Sigmoid colon (tissue), 7 donors: ENCODE measurements at regions of chr10 and their contacts with region 1.

Region 1: GRCh38 chr10:4849555-4850242 is 23.7 kb downstream of the AKR1E2 start:
- DNase-seq: peak; percentile 95
- H3K4me3 ChIP-seq: no peak overlapping the region
- H3K27ac ChIP-seq: peak overlapping the region in 2 of 4 donors; percentile 12 to 40
- H3K4me1 ChIP-seq: peaks cover 0 to 24% (median 9%) of the 10 kb centered on the region in 4 donors
- H3K27me3 ChIP-seq: no peaks in the 10 kb centered on the region
- CTCF ChIP-seq: peak; percentile 98 to 100 (median 100)
- EP300 ChIP-seq: no peak
- POLR2A ChIP-seq: no peak

Region 2: GRCh38 chr10:4678023-4678950 is 171.4 kb before region 1 on chr10:
- intact Hi-C with region 1: no loop called
- DNase-seq: no peak
- H3K4me3 ChIP-seq: no peak overlapping the region
- H3K27ac ChIP-seq: peak overlapping the region in 3 of 4 donors; percentile 70 to 77 (median 77)
- H3K4me1 ChIP-seq: peaks cover 0 to 18% (median 10%) of the 10 kb centered on the region in 4 donors
- H3K27me3 ChIP-seq: no peaks in the 10 kb centered on the region
- CTCF ChIP-seq: no peak
- EP300 ChIP-seq: peak in 1 of 4 donors; percentile 36
- POLR2A ChIP-seq: no peak

Region 3: DNA sequence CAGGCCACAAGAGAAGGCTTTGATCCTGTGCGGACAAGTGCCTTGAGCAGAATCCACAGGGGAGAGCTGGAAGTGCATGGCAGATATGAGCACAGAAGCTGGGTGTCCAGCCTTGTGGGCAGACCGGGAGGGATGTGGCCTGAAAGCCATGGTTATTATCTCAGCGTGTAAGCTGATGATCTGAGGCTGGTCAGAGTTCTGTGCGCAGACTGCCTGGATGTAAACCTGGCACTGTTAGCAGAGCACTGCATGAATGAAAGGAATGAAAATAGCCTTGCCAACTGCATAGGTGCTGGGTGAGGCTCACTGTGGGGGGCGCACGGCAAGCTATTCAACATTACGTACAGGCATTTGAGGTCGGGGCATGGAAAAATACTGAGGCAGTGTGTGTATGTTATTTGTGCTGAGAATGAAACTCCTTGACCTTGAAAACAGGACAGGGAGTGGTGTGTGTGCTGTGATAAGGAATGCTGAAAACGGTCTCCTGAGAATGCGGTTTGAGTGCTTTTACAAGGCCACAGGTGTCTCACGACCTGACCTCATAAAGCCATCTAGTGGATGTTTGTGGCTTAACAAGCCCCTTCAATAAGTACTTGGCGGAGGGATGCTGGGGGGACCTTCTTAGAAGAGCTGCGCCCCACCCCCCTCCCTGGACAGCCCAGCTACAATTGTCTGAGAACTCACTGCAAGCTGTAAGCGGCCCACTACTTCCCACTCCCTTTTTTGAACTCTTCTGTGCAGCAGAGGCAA is 132.2 kb after region 1 on chr10:
- intact Hi-C with region 1: loop called (anchors 5 kb)
- DNase-seq: no peak
- H3K4me3 ChIP-seq: no peak overlapping the region
- H3K27ac ChIP-seq: peak overlapping the region in 3 of 4 donors; percentile 24 to 58 (median 40)
- H3K4me1 ChIP-seq: peaks cover 0 to 27% (median 15%) of the 10 kb centered on the region in 4 donors
- H3K27me3 ChIP-seq: no peaks in the 10 kb centered on the region
- CTCF ChIP-seq: peak in 2 of 4 experiments; percentile 23 to 28
- EP300 ChIP-seq: no peak
- POLR2A ChIP-seq: no peak

Region 4: DNA sequence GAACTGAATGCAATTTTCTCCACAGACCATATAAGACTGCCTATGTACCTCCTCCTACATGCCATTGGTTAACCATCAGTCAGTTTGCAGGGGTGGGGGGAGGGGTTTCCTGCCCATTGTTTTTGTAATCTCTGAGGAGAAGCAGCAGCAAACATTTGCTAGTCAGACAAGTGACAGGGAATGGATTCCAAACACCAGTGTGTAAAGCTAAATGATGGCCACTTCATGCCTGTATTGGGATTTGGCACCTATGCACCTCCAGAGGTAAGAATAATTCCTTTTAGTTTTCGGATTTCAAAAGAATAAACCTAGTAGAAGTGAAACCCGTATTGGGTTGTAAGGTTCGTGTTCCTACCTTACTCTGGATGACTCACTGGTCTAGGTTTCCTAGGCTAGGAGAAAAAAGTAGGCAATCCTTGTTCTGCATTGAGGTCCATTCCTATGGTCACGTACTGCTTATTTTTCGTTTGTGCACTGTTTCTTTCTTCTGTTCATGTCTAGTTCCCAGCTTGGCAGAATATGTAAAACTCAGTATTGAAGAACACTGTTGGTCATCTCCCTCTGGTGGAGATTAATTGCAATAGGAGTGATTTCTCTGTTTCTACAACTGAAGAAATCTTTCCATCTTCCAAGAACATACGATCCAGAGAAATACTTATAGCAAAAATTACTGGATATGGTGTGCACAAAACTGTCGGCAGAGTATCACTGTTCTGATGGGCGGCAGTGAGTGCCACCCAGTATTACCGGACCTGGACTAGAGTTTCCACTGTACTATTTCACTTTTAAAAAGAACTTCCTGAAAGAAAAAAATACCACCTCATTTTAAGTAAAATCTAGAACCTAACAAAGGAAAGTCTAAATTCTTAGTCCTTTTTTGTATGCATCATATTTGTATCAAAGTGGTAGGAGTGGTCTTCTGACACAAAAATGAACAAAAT is 244.8 kb after region 1 on chr10 and contains the start of gene AKR1C3:
- intact Hi-C with region 1: loop called (anchors 1 kb)
- DNase-seq: no peak
- H3K4me3 ChIP-seq: peak within 1 kb of the TSS; percentile 22 to 50 (median 40)
- H3K27ac ChIP-seq: peak within 1 kb of the TSS; percentile 20 to 60 (median 58)
- H3K4me1 ChIP-seq: no peaks in the 10 kb centered on the region
- H3K27me3 ChIP-seq: no peaks in the 10 kb centered on the region
- CTCF ChIP-seq: peak; percentile 63 to 84 (median 72)
- EP300 ChIP-seq: no peak
- POLR2A ChIP-seq: peak in 1 of 2 donors; percentile 42
- total RNA-seq, gene AKR1C3: 6.1 to 30.5 (median 12.0) TPM

Region 5: GRCh38 chr10:5283305-5284158 is 433.8 kb after region 1 on chr10:
- intact Hi-C with region 1: loop called (anchors 2 kb)
- DNase-seq: peak; percentile 70
- H3K4me3 ChIP-seq: no peak overlapping the region
- H3K27ac ChIP-seq: no peak overlapping the region
- H3K4me1 ChIP-seq: no peaks in the 10 kb centered on the region
- H3K27me3 ChIP-seq: no peaks in the 10 kb centered on the region
- CTCF ChIP-seq: peak in 3 of 4 experiments; percentile 52 to 56 (median 52)
- EP300 ChIP-seq: no peak
- POLR2A ChIP-seq: no peak

Region 6: GRCh38 chr10:5385224-5385623 is 535.5 kb after region 1 on chr10:
- intact Hi-C with region 1: loop called (anchors 2 kb)
- DNase-seq: no peak
- H3K4me3 ChIP-seq: no peak overlapping the region
- H3K27ac ChIP-seq: no peak overlapping the region
- H3K4me1 ChIP-seq: no peaks in the 10 kb centered on the region
- H3K27me3 ChIP-seq: no peaks in the 10 kb centered on the region
- CTCF ChIP-seq: no peak
- EP300 ChIP-seq: no peak
- POLR2A ChIP-seq: no peak

Region 7: GRCh38 chr10:5434017-5434753 is 584.5 kb after region 1 on chr10:
- intact Hi-C with region 1: loop called (anchors 2 kb)
- DNase-seq: no peak
- H3K4me3 ChIP-seq: no peak overlapping the region
- H3K27ac ChIP-seq: no peak overlapping the region
- H3K4me1 ChIP-seq: no peaks in the 10 kb centered on the region
- H3K27me3 ChIP-seq: no peaks in the 10 kb centered on the region
- CTCF ChIP-seq: peak; percentile 42 to 57 (median 51)
- EP300 ChIP-seq: no peak
- POLR2A ChIP-seq: no peak

Region 8: GRCh38 chr10:5488309-5489167 is 638.8 kb after region 1 on chr10:
- intact Hi-C with region 1: no loop called
- DNase-seq: peak; percentile 56
- H3K4me3 ChIP-seq: no peak overlapping the region
- H3K27ac ChIP-seq: no peak overlapping the region
- H3K4me1 ChIP-seq: no peaks in the 10 kb centered on the region
- H3K27me3 ChIP-seq: no peaks in the 10 kb centered on the region
- CTCF ChIP-seq: no peak
- EP300 ChIP-seq: no peak
- POLR2A ChIP-seq: no peak